Right cardiac atrium (tissue), 5 donors: ENCODE measurements at regions of chr2 and their contacts with region 1.

Region 1: GRCh38 chr2:65957886-65958285 is 477.0 kb upstream of the MEIS1 start:
- DNase-seq: no peak
- ATAC-seq: no peak
- H3K4me3 ChIP-seq: no peak overlapping the region
- H3K27ac ChIP-seq: no peak overlapping the region
- H3K4me1 ChIP-seq: no peaks in the 10 kb centered on the region
- H3K27me3 ChIP-seq: no peaks in the 10 kb centered on the region

Region 2: DNA sequence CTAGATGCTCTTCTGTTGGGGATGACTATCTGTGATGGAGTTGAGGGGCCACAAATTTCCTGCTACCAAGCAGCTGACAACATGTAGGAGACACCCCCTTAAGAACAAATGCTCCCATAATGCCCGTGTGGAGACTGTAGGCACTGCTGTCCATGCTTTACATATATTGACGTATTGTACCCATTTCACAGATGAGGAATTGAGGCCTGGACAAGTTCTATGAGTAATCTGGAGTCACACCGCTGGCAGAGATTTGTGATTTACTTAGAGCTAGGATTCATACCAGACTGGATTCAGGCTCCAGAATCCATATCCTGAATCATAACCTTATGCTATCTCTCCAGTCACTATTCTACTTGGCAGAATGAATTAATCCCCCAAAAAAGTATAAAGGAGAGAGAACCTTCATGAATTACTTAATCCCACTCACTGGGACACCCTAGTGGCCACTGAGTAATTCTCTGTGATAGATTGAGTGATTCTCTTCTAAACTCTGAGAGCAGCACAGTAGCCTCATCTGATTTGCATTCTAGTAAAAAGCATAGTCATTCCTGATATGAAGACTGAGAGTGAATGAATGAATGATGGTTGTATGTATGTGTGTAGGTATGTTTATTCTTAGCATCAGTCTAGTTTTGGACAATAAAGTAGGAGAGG is 16.3 kb after region 1 on chr2:
- intact Hi-C with region 1: loop called in 1 of 4 experiments (anchors 1 kb)
- DNase-seq: no peak
- ATAC-seq: no peak
- H3K4me3 ChIP-seq: no peak overlapping the region
- H3K27ac ChIP-seq: no peak overlapping the region
- H3K4me1 ChIP-seq: no peaks in the 10 kb centered on the region
- H3K27me3 ChIP-seq: no peaks in the 10 kb centered on the region

Region 3: DNA sequence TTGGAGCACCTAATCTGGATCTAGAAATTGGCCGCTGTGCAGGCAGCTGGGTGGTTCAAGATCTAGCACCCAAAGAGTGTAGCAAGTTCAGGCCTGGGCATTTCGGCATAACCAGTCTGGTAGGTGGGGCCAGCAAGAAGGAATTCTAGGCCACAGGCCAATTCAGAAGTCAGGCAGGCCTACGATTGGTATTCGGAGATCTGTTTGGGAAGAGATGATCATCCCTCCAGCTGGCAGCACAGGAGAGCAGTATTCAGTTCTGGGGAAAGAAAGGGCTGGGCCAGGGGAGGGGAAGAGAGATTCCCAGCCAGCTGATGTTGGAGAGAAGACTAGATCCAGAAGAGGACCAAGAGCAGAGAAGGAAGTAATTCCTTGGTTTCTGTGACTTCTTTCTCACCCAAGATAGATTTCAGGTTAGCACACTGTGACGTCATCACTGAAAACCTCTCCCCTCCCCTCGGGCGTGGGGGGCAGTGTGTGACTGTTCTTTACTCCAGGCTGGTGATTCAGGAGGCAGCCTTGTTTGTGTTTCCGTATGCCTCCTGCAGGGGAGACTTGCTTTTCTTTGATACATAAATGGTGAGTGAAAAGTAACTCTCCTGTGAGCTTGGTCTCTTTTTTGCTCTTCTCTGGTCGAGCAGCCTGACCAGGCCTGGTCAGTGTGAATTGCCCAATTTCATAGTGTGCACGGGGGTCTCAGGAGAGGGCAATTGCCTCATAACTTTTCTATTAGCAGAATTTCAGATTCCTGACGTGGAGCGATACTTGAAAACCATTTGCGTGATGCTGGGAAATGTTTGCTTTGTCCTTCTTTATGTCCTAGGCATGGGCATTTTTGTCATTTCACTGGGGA is 538.1 kb after region 1 on chr2:
- intact Hi-C with region 1: no loop called
- DNase-seq: peak; percentile 44 to 68 (median 55)
- ATAC-seq: peak; percentile 71 to 83
- H3K4me3 ChIP-seq: no peak overlapping the region
- H3K27ac ChIP-seq: peak overlapping the region; percentile 79
- H3K4me1 ChIP-seq: peaks cover 12% of the 10 kb centered on the region
- H3K27me3 ChIP-seq: no peaks in the 10 kb centered on the region